ENCODE measurements at regions of chr15 and their contacts with region 1.

Region 1: GRCh38 chr15:71800835-71801745 is 9.3 kb upstream of the NR2E3 start:
- DNase-seq: no peak
- ATAC-seq: peak; percentile 83

Region 2: DNA sequence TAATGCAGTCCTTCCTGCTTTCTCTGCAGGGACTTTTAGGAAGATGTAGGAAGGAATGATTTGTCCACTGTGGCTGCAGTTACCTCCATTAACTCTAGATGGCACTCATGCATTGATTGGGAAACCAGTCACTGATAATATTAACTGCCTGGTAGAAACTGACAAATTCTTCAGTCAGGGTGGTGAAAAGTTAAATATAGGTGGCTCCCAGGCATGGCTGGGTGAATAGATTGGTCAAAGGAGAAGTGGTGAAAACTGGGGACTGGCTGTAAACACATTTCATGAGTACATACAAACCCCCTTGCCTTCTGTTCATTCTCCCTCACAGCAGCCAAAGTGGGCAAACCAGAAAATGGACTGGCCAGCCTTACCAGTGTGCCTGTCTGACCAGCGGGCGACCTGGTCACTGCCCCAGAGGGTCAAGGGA is 352.4 kb before region 1 on chr15:
- intact Hi-C with region 1: loop called (anchors 5 kb)
- DNase-seq: no peak
- ATAC-seq: peak; percentile 90

Region 3: GRCh38 chr15:71707230-71708050 is 93.7 kb before region 1 on chr15:
- intact Hi-C with region 1: no loop called
- DNase-seq: no peak
- ATAC-seq: peak; percentile 45

Region 4: DNA sequence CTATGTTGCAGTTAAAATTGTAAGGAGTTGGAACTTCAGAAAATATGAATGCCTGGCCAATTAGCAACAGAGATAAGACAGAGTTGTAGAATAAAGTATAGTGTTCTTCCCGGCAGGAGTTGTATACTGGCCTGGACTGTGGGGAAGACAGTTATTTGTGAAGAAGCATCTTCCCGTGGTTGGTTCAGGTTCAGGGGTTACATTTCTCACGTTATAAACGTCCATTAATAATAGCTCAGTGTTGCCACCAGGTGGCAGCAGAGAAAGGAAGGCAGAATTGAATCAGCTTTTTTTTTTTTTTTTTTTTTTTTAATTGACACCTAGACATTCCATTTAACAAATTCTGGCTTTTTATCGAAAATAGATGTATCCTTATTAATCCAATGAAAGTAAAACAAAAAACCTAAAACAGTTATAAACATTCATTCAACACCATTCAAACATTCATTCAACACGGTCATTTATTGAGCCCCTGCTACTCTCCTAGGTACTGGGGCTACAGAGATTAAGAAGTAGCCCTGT is 57.2 kb before region 1 on chr15:
- intact Hi-C with region 1: loop called (anchors 5 kb)
- DNase-seq: no peak
- ATAC-seq: peak; percentile 65

Region 5: DNA sequence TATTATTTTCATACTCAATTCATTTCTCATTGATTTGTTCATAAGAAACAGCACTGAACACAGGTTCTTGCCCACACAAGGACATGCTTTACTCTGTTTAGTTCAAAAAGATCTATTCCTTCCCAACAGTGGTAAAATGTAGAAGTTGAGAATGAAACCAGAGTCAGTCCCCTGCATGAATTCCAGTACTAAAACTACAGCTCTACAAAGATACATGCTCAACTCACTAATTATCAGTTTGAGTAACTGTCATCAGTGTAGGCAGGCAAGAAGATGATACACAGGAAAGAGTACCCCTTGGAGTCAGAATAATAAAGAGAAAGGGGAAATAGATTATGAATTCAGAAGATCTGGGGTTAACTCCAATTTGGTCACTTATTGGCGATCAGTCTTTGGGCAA is 52.5 kb after region 1 on chr15:
- intact Hi-C with region 1: no loop called
- DNase-seq: no peak
- ATAC-seq: no peak

Region 6: DNA sequence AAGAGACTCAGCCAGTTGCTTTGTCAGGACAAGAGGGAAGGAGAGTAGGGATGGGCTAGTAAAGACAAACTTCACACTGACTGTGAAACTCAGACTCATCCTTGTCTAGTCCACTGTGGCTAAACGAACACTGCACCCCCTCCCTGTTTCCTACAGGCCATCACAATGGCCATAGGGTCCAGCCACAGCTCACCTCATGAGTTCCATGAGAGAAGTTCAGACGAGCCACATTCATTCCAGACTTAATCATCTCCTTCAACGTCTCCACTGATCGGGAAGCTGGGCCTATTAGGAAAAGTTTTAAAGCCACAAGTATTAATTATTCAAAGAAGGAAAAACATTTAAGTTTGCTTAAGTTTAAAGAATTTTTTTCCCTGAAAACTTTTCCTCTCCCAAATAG is 416.1 kb after region 1 on chr15:
- intact Hi-C with region 1: no loop called
- DNase-seq: no peak
- ATAC-seq: no peak

Measured in Right ventricle myocardium superior (tissue), 1 donor.